Endothelial cell of umbilical vein (primary cell): ENCODE measurements at regions of chr14 and their contacts with region 1.

Region 1: DNA sequence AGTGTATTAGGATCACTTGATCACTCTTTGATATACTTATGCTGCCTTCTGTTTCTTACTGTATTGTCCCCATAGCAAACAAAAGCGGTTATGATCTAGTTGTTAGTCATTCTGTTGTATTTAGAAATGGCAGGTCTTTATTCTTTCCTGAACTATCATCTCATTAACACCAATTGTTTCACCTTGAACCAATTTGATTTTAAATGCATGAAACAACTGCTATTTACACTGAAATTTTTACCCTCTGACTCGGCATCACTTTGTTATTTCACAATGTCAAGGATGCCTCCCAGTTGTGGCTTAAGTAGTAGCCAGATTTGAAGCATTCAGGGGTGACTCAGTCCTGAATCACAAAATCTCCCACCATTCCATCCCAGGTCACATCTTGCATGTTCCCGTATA is 303.5 kb downstream of the EGLN3 start:
- DNase-seq: peak; percentile 85
- H3K4me3 ChIP-seq: no peak overlapping the region
- H3K27ac ChIP-seq: peak overlapping the region; percentile 90
- H3K4me1 ChIP-seq: peaks cover 30% of the 10 kb centered on the region
- H3K27me3 ChIP-seq: no peaks in the 10 kb centered on the region
- CTCF ChIP-seq: no peak
- POLR2A ChIP-seq: no peak

Region 2: GRCh38 chr14:32968972-32969544 is 678.3 kb before region 1 on chr14:
- CTCF ChIA-PET with region 1: no interaction called
- POLR2A ChIA-PET with region 1: no interaction called
- dilution Hi-C with region 1: no loop called
- intact Hi-C with region 1: no loop called
- DNase-seq: no peak
- H3K4me3 ChIP-seq: no peak overlapping the region
- H3K27ac ChIP-seq: no peak overlapping the region
- H3K4me1 ChIP-seq: no peaks in the 10 kb centered on the region
- H3K27me3 ChIP-seq: no peaks in the 10 kb centered on the region
- CTCF ChIP-seq: no peak
- POLR2A ChIP-seq: no peak

Region 3: DNA sequence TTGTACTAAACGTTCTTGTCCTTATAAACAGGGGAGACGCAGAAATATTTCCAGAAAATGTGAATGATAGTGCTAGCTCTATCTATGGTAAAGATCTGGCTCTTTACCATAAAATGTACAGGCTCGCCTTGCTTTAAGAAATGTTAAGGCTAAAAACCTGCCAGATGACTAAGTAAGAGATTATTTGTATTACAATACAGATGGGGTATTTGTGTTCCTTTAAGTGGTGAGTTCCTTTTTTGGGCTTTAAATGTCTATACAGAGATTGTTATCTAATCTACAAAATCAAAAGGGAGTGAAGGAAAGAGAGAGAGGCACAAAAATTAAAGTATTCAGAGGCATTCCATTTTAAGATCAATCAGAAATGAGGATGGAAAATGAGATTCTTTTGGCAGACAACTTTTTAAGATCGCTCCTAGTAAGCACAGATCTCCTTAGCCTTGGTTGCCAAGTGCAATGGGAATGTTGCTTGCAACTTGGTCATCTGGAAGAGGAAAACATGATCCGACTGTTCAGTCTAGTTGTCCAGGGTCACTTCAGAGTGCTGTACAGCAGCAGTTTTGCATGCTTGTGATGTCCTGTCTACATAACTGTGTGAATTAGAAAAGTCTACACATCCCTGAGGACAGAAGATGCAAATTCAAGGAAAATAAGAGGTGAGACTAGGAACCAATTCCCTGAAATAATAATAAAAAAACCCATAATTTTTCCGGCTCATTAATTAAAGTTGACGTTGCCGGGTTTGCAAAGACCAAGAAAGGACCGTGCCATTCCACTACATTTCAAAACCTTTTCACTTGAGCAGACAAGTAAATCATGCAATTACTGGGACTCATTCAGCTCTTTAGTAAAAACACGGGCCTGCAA is 77.3 kb before region 1 on chr14:
- CTCF ChIA-PET with region 1: no interaction called
- POLR2A ChIA-PET with region 1: no interaction called
- dilution Hi-C with region 1: no loop called
- intact Hi-C with region 1: loop called (anchors 1 kb)
- DNase-seq: peak; percentile 35
- H3K4me3 ChIP-seq: no peak overlapping the region
- H3K27ac ChIP-seq: peak overlapping the region; percentile 100
- H3K4me1 ChIP-seq: peaks cover 61% of the 10 kb centered on the region
- H3K27me3 ChIP-seq: no peaks in the 10 kb centered on the region
- CTCF ChIP-seq: no peak
- POLR2A ChIP-seq: no peak

Region 4: DNA sequence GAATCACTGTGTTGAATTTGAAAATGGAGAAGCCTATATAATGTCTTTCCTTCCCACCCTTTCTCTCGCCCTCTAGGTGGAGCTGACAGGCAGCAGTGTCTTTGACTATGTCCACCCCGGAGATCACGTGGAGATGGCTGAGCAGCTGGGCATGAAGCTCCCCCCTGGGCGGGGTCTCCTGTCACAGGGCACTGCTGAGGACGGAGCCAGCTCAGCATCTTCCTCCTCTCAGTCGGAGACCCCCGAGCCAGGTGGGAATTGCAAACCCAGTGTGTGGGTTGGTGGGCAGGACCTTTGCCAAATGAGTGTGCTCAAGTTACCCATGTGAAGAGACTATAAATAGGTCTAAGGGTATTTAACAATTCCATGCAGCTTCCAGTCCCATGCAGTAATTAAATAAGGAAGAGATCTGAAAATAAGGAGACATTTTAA is 28.8 kb after region 1 on chr14:
- CTCF ChIA-PET with region 1: interaction called, 5 read pairs
- POLR2A ChIA-PET with region 1: no interaction called
- dilution Hi-C with region 1: no loop called
- intact Hi-C with region 1: loop called (anchors 2 kb)
- DNase-seq: peak; percentile 26
- H3K4me3 ChIP-seq: no peak overlapping the region
- H3K27ac ChIP-seq: no peak overlapping the region
- H3K4me1 ChIP-seq: peaks cover 20% of the 10 kb centered on the region
- H3K27me3 ChIP-seq: no peaks in the 10 kb centered on the region
- CTCF ChIP-seq: peak; percentile 17 to 29
- POLR2A ChIP-seq: no peak

Region 5: GRCh38 chr14:33691907-33692306 is 44.5 kb after region 1 on chr14:
- CTCF ChIA-PET with region 1: no interaction called
- POLR2A ChIA-PET with region 1: no interaction called
- dilution Hi-C with region 1: no loop called
- intact Hi-C with region 1: no loop called
- DNase-seq: no peak
- H3K4me3 ChIP-seq: no peak overlapping the region
- H3K27ac ChIP-seq: no peak overlapping the region
- H3K4me1 ChIP-seq: no peaks in the 10 kb centered on the region
- H3K27me3 ChIP-seq: no peaks in the 10 kb centered on the region
- CTCF ChIP-seq: no peak
- POLR2A ChIP-seq: no peak

Region 6: DNA sequence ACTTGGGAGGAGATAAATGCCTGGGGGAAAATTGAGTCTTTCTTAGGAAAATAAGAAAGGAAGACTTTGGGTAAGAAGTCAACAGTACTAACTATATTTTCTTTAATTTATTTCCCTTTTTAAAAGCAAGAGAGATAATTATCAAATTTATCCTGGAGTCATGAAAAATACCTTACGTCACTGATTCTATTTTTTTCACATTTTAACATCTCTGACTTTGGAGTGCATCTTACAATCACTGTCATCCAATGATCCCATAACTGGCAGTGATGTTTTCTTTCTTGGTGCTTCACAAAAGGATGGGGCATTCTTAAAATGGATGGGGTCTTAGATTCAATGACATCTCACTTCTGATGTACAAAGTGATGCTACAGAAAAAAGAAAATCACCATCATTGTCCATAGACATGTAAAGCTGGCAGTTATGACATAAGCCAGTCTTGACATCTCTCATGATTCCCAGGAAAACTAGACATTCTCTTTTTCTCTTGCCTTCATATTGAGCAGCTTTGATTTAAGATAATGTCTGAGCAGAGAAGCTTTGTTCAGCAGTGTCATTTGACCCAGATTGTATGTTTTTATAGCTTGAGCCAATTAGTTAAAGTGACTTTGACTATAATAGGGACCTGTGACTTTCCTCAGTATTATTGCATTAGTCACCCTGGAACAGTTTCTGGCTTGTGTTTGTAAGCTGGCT is 67.3 kb after region 1 on chr14:
- CTCF ChIA-PET with region 1: no interaction called
- POLR2A ChIA-PET with region 1: no interaction called
- dilution Hi-C with region 1: no loop called
- intact Hi-C with region 1: no loop called
- DNase-seq: peak; percentile 46
- H3K4me3 ChIP-seq: no peak overlapping the region
- H3K27ac ChIP-seq: no peak overlapping the region
- H3K4me1 ChIP-seq: no peaks in the 10 kb centered on the region
- H3K27me3 ChIP-seq: no peaks in the 10 kb centered on the region
- CTCF ChIP-seq: no peak
- POLR2A ChIP-seq: no peak